Heart left ventricle (tissue), 16 donors: ENCODE measurements at regions of chr11 and their contacts with region 1.

Region 1: GRCh38 chr11:61816736-61817455 is at the start of gene FADS1:
- DNase-seq: peak; percentile 90 to 96 (median 95)
- ATAC-seq: peak; percentile 4 to 69 (median 46)
- H3K4me3 ChIP-seq: peak within 1 kb of the TSS; percentile 59 to 91 (median 72)
- H3K27ac ChIP-seq: peak within 1 kb of the TSS; percentile 92 to 100 (median 98)
- H3K4me1 ChIP-seq: peaks cover 0 to 25% (median 10%) of the 10 kb centered on the region in 12 donors
- H3K27me3 ChIP-seq: no peaks in the 10 kb centered on the region
- CTCF ChIP-seq: peak; percentile 30 to 74 (median 55)
- POLR2A ChIP-seq: peak in 1 of 2 donors; percentile 63
- total RNA-seq, gene FADS1: 16.9 to 37.6 (median 23.6) TPM

Region 2: GRCh38 chr11:61616434-61616833 is 200.5 kb before region 1 on chr11:
- intact Hi-C with region 1: no loop called
- DNase-seq: no peak
- ATAC-seq: no peak
- H3K4me3 ChIP-seq: no peak overlapping the region
- H3K27ac ChIP-seq: no peak overlapping the region
- H3K4me1 ChIP-seq: peaks cover 0 to 7% (median 0%) of the 10 kb centered on the region in 12 donors
- H3K27me3 ChIP-seq: no peaks in the 10 kb centered on the region
- CTCF ChIP-seq: no peak
- POLR2A ChIP-seq: no peak

Region 3: DNA sequence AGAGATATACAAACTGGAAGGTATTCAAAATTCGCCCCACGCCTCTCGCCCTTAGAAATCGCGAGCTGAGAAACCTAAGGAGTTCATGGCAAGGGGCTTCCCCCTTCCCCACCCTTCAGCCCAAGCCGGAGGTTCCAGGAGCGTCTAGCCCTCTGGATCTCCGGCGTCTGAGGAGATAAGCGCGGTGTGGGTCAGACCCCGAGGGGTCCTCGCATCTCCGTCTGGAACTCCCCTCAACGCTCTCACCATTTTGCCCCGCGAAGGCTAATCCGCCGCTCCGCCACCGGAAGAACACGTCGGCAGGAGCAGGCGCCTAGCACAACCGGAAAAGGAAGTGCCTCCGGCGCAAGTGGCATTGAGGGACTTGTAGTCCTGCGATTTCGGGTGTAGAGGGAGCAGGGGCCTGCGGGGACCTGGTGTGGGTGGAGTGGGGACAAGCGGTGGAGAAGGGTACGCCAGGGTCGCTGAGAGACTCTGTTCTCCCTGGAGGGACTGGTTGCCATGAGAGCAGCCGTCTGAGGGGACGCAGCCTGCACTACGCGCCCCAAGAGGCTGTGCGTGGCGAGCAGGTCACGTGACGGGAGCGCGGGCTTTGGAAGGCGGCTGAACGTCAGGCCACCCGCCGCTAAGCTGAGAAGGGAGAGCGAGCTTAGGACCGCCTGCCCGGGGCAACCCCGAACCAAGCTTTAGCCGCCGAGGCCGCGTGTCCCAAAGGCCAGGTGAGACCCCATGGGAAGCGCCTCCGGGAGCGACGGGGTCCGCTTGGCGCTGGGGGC is 24.4 kb before region 1 on chr11 and contains the starts of genes FEN1 and TMEM258:
- intact Hi-C with region 1: no loop called
- DNase-seq: peak; percentile 89 to 94 (median 93)
- ATAC-seq: peak; percentile 88 to 94 (median 93)
- H3K4me3 ChIP-seq: peak within 1 kb of the TSS; percentile 62 to 92 (median 72)
- H3K27ac ChIP-seq: peak within 1 kb of the TSS; percentile 89 to 99 (median 96)
- H3K4me1 ChIP-seq: peaks cover 6 to 26% (median 19%) of the 10 kb centered on the region in 12 donors
- H3K27me3 ChIP-seq: no peaks in the 10 kb centered on the region
- CTCF ChIP-seq: peak in 2 of 12 donors; percentile 8 to 10
- POLR2A ChIP-seq: peak in 1 of 2 donors; percentile 62
- total RNA-seq, gene FEN1: 3.9 to 13.7 (median 6.8) TPM
- total RNA-seq, gene TMEM258: 48.0 to 129 (median 103) TPM

Region 4: DNA sequence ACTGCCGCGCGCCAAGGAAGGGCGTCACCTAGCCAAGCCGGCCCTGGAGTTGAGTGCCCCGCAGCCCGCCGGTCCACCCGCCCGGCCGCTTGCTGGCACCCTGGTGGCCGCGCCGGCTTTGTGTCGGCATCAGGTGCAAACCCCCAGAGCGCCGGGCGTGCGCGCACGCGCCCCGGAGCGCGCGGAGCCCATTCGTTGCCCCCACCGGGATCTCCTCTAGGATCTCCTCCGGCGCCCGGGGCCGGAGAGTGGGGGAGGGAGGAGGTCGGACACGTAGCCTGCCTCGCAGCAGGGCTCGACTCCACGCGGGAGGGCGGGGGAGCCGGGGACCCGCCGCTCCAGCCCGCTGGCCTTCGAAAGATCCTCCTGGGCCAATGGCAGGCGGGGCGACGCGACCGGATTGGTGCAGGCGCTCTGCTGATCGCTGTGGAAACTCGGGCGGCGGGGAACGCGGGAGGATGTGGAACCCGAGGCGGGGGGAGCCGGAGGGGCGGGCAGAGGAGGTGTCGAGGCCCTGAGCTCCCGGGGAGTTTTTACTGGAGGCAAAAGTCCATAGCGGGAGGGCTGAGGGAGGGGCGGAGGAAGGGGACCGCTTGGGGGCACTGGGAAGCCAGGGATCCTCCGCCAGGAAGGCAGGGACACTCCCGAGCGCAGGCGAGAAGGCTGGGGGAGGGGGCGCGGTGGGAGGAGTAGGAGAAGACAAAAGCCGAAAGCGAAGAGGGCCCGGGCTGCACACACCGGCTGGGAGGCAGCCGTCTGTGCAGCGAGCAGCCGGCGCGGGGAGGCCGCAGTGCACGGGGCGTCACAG is 10.9 kb after region 1 on chr11 and contains the start of gene FADS2:
- intact Hi-C with region 1: loop called in 1 of 10 experiments (anchors 1 kb)
- DNase-seq: peak; percentile 94 to 96 (median 95)
- ATAC-seq: peak; percentile 52 to 90 (median 88)
- H3K4me3 ChIP-seq: peak within 1 kb of the TSS; percentile 47 to 80 (median 66)
- H3K27ac ChIP-seq: peak within 1 kb of the TSS; percentile 40 to 96 (median 86)
- H3K4me1 ChIP-seq: peaks cover 0 to 52% (median 29%) of the 10 kb centered on the region in 12 donors
- H3K27me3 ChIP-seq: no peaks in the 10 kb centered on the region
- CTCF ChIP-seq: peak in 1 of 12 donors; percentile 10
- POLR2A ChIP-seq: peak in 1 of 2 donors; percentile 16
- total RNA-seq, gene FADS2: 2.6 to 38.2 (median 19.2) TPM

Region 5: DNA sequence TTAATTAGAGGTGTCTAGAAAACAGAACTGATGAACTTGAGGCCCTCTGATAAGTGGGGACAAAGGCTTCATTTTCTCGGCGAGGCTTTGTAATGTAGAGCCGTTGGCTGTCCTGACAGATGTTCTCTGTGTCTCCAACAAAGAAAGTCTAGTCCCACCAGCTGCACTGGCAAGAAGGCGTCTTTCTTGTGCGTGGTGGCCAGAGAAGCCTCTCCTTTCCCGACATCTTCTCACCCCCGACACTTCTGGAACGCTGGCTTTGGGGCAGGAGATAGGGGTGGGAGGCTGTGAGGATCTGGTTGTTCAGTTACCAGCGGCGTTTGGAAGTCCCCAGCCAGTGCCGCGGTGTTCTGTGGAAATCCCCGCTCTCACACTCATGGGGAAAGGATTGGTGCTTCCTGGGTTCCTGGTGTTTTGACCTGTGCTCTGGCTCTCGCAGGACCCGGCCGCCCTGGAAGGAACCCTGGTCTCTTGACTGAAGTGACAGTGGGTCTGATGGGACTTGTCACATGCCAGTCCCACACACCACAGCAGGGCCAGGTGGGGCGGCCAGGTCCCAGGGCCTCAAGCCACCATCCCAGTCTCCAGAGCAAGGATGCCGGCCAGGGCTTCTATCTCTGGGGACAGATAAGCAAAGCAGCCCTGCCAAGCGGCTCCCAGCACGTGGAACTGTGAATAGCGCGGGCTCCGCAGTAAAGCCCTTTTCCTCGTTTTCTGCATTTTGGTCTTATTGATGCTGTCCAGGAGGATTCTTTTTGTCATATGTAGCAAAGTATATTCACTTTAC is 34.4 kb after region 1 on chr11:
- intact Hi-C with region 1: loop called in 1 of 10 experiments (anchors 5 kb)
- DNase-seq: peak; percentile 63 to 84 (median 76)
- ATAC-seq: peak; percentile 62 to 75 (median 72)
- H3K4me3 ChIP-seq: no peak overlapping the region
- H3K27ac ChIP-seq: peak overlapping the region; percentile 12 to 81 (median 57)
- H3K4me1 ChIP-seq: peaks cover 5 to 33% (median 15%) of the 10 kb centered on the region in 12 donors
- H3K27me3 ChIP-seq: no peaks in the 10 kb centered on the region
- CTCF ChIP-seq: no peak
- POLR2A ChIP-seq: no peak

Region 6: DNA sequence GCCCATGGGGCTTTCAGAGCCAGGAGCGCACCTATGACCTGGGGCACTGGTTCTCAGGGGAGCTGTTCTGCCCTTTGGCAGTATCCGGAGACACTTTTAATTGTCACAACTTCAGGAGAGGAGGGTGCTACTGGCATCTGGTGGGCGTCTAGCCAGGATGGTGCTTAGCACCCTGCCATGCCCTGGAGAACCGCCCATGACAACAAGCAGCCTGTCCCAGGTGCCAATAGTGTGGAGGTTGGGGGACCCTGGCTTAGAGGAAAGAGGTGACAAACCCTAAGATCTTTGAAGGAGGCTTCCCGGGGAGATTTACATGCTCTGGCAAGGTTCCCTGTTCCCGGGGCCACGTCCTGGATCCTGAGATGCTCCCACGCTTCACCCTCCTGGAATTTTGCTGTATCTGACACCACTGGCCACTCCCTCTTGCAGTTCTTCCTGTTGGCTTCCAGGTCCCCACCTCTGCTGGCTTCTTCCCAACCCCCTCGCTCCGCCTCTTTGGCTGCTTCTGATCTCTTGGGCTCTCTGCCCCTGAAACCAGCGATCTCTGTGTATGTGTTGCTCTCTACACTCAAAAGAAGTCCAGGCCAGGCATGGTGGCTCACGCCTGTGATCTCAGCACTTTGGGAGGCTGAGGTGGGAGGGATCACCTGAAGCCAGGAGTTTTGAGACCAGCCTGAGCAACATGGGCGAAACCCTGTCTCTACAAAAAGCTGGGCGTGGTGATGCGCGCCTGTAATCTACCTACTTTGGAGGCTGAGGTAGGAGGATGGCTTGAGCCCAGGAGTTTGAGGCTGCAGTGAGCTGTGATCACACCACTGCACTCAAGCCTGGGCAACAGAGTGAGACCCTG is 43.4 kb after region 1 on chr11:
- intact Hi-C with region 1: loop called in 2 of 10 experiments (anchors 5 kb)
- DNase-seq: peak; percentile 74 to 87 (median 77)
- ATAC-seq: peak; percentile 26 to 74 (median 56)
- H3K4me3 ChIP-seq: no peak overlapping the region
- H3K27ac ChIP-seq: peak overlapping the region in 10 of 12 donors; percentile 3 to 83 (median 74)
- H3K4me1 ChIP-seq: peaks cover 0 to 29% (median 11%) of the 10 kb centered on the region in 12 donors
- H3K27me3 ChIP-seq: no peaks in the 10 kb centered on the region
- CTCF ChIP-seq: no peak
- POLR2A ChIP-seq: no peak

Region 7: GRCh38 chr11:61871158-61871597 is 54.3 kb after region 1 on chr11:
- intact Hi-C with region 1: loop called in 2 of 10 experiments (anchors 5 to 10 kb)
- DNase-seq: peak; percentile 80 to 92 (median 88)
- ATAC-seq: peak; percentile 79 to 90 (median 84)
- H3K4me3 ChIP-seq: peak overlapping the region in 7 of 12 donors; percentile 11 to 41 (median 20)
- H3K27ac ChIP-seq: peak overlapping the region in 9 of 12 donors; percentile 1 to 82 (median 56)
- H3K4me1 ChIP-seq: peaks cover 2 to 48% (median 20%) of the 10 kb centered on the region in 12 donors
- H3K27me3 ChIP-seq: no peaks in the 10 kb centered on the region
- CTCF ChIP-seq: peak; percentile 88 to 98 (median 94)
- POLR2A ChIP-seq: peak in 1 of 2 donors; percentile 13

Region 8: GRCh38 chr11:61891331-61892084 is 74.6 kb after region 1 on chr11 and contains the start of gene FADS3:
- intact Hi-C with region 1: loop called in 4 of 10 experiments (anchors 5 kb)
- DNase-seq: peak; percentile 91 to 95 (median 93)
- ATAC-seq: peak; percentile 76 to 91 (median 86)
- H3K4me3 ChIP-seq: peak within 1 kb of the TSS; percentile 67 to 98 (median 94)
- H3K27ac ChIP-seq: peak within 1 kb of the TSS; percentile 68 to 97 (median 93)
- H3K4me1 ChIP-seq: peaks cover 15 to 55% (median 41%) of the 10 kb centered on the region in 12 donors
- H3K27me3 ChIP-seq: no peaks in the 10 kb centered on the region
- CTCF ChIP-seq: peak in 1 of 12 donors; percentile 4
- POLR2A ChIP-seq: peak in 1 of 2 donors; percentile 86
- total RNA-seq, gene FADS3: 53.2 to 147 (median 79.6) TPM

Region 9: DNA sequence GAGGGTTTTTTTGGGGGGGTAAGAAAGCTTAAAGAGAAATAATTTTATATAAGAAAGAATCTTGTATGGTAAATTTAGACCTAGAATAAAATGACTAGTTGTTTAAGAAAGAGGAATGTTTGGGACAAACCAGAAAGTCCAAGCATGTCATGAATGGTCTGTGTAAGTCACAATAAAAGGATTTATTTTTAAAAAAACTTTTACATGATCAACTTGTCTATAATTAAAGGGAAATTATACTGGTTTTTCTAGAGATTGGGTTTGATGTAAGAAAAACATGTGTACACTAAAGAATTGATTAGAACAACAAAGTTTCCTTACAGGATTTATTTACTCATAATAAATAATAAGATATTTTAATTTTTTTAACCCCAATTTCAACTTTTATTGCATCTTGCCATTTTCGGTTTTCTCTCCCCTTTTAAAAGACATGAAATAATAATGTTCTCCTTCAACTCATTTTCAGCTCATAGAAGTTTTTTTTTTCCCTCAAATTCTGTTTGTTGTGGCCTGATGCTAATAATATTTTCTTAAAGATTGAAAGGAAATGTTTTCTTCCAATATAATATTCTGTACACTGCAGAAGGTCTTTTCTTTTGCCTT is 271.5 kb after region 1 on chr11:
- intact Hi-C with region 1: loop called in 1 of 10 experiments (anchors 5 kb)
- DNase-seq: no peak
- ATAC-seq: no peak
- H3K4me3 ChIP-seq: no peak overlapping the region
- H3K27ac ChIP-seq: no peak overlapping the region
- H3K4me1 ChIP-seq: no peaks in the 10 kb centered on the region
- H3K27me3 ChIP-seq: no peaks in the 10 kb centered on the region
- CTCF ChIP-seq: no peak
- POLR2A ChIP-seq: no peak